Naive thymus-derived CD8-positive, alpha-beta T cell (primary cell): ENCODE measurements at regions of chr14 and their contacts with region 1.

Region 1: GRCh38 chr14:21510735-21511657 is at the start of gene METTL3:
- DNase-seq: peak; percentile 76 to 98 (median 92)
- ATAC-seq: peak; percentile 99
- H3K4me3 Mint-ChIP-seq: peak within 1 kb of the TSS; percentile 92 to 99 (median 98)
- H3K27ac Mint-ChIP-seq: peak within 1 kb of the TSS; percentile 96 to 99 (median 98)
- H3K4me1 Mint-ChIP-seq: peaks cover 19 to 44% (median 39%) of the 10 kb centered on the region in 4 donors
- H3K27me3 Mint-ChIP-seq: no peaks in the 10 kb centered on the region
- polyA plus RNA-seq, gene METTL3: 12.4 to 24.5 (median 20.5) TPM

Region 2: GRCh38 chr14:21455911-21456667 is 54.9 kb before region 1 on chr14 and contains the start of gene CHD8:
- POLR2A ChIA-PET with region 1: interaction called, 31 read pairs
- DNase-seq: peak; percentile 95 to 100 (median 100)
- ATAC-seq: peak; percentile 96
- H3K4me3 Mint-ChIP-seq: peak within 1 kb of the TSS; percentile 93 to 100 (median 99)
- H3K27ac Mint-ChIP-seq: peak within 1 kb of the TSS; percentile 95 to 100 (median 100)
- H3K4me1 Mint-ChIP-seq: peaks cover 14 to 48% (median 42%) of the 10 kb centered on the region in 4 donors
- H3K27me3 Mint-ChIP-seq: no peaks in the 10 kb centered on the region
- polyA plus RNA-seq, gene CHD8: 20.7 to 34.9 (median 29.4) TPM

Region 3: DNA sequence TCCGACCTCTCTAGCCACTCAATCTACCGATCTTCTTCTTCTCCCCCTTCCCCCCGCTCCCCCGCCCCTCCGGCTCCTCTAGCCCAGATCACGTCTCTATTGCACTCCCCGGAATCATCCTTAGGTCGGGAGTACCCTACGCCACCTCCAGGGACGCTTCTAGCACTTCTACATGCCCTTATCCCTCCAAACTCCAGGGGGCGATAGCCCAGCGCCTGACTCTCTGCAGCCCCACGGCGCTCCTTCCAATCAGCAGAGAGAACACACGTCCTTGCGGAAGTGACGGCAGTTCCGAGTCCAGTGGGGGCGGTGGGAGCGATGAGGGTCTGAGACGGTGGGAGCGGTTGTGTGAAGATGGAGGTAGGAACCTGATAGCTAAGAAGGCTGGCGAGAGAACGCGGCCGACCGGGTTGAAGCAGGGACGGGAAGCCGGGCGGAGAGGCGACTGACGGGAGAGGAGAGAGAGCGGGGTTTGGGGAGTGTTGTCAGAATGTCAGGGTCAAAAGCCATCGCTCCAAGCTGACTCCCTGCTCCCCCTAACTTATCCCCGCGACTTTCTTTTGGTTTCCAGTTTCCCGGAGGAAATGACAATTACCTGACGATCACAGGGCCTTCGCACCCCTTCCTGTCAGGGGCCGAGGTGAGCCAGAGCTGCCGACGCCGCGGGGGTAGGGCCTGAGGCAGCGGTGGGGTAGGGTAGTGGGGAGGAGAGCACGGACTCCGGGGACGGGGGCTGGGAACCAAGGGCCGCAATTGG is 33.9 kb before region 1 on chr14 and contains the starts of genes RAB2B and TOX4:
- POLR2A ChIA-PET with region 1: interaction called, 25 read pairs
- DNase-seq: peak; percentile 79 to 99 (median 97)
- ATAC-seq: peak; percentile 95 to 96
- H3K4me3 Mint-ChIP-seq: peak within 1 kb of the TSS; percentile 93 to 100 (median 100)
- H3K27ac Mint-ChIP-seq: peak within 1 kb of the TSS; percentile 97 to 100 (median 99)
- H3K4me1 Mint-ChIP-seq: peaks cover 13 to 51% (median 42%) of the 10 kb centered on the region in 4 donors
- H3K27me3 Mint-ChIP-seq: no peaks in the 10 kb centered on the region
- polyA plus RNA-seq, gene RAB2B: 8.7 to 11.0 (median 9.9) TPM
- polyA plus RNA-seq, gene TOX4: 68.6 to 87.5 (median 75.8) TPM

Region 4: DNA sequence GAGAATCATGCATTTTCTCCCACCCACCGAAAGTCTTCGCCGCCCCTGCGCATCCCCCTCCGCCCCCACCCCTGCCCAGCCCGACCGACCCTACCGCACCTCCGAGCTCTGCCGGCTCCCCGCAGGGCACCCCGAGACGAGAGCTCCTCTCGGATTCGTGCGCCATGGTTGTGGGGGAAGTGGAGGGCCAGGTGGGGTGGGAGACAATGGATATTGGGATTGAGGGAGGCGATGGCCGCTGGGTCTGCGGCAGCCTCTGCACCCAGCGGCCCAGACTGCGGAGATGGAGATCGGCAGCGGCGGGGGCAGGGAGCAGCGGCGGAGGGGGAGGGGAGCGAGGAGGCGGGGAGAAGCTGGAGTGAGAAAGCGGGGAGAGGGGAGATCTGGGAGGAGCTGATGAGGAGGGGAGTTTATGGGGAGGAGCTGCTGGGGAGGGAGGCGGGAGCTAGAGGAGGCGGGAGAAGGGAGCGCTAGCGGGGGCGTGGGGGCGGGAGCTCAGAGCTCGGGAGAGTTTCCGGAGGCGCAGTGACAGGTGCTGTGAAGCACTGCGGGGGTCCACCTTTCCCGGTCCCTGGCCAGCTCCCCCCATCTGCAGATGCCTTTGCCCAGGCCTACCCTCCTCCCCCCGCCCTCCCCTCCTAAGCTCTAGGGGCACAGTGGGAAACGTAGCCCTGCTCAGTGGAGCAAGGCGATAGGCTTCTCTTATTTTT is 15.1 kb after region 1 on chr14 and contains the start of gene SALL2:
- POLR2A ChIA-PET with region 1: interaction called, 46 read pairs
- DNase-seq: peak; percentile 26 to 78 (median 60)
- ATAC-seq: peak; percentile 82 to 87
- H3K4me3 Mint-ChIP-seq: peak within 1 kb of the TSS; percentile 77 to 96 (median 88)
- H3K27ac Mint-ChIP-seq: peak within 1 kb of the TSS; percentile 75 to 94 (median 84)
- H3K4me1 Mint-ChIP-seq: peaks cover 9 to 35% (median 19%) of the 10 kb centered on the region in 4 donors
- H3K27me3 Mint-ChIP-seq: peaks cover 0 to 2% (median 0%) of the 10 kb centered on the region in 5 donors
- polyA plus RNA-seq, gene SALL2: 2.5 to 3.8 (median 2.5) TPM

Region 5: GRCh38 chr14:21575661-21576060 is 64.7 kb after region 1 on chr14:
- POLR2A ChIA-PET with region 1: no interaction called
- DNase-seq: no peak
- ATAC-seq: no peak
- H3K4me3 Mint-ChIP-seq: no peak overlapping the region
- H3K27ac Mint-ChIP-seq: no peak overlapping the region
- H3K4me1 Mint-ChIP-seq: no peaks in the 10 kb centered on the region
- H3K27me3 Mint-ChIP-seq: peaks cover 4 to 19% (median 14%) of the 10 kb centered on the region in 5 donors